WTC11 (cell line): ENCODE measurements at regions of chr19 and their contacts with region 1.

Region 1: GRCh38 chr19:44576843-44577565 is 36.4 kb upstream of the IGSF23 start:
- DNase-seq: peak; percentile 64
- ATAC-seq: peak; percentile 94
- H3K4me3 Mint-ChIP-seq: no peak overlapping the region
- H3K27ac Mint-ChIP-seq: no peak overlapping the region
- H3K4me1 Mint-ChIP-seq: peaks cover 16% of the 10 kb centered on the region
- H3K27me3 Mint-ChIP-seq: peaks cover 3% of the 10 kb centered on the region
- CTCF ChIP-seq: peak; percentile 28

Region 2: GRCh38 chr19:44552324-44552723 is 24.7 kb before region 1 on chr19:
- CTCF ChIA-PET with region 1: interaction called, 16 read pairs
- POLR2A ChIA-PET with region 1: no interaction called
- DNase-seq: peak; percentile 95
- ATAC-seq: peak; percentile 99
- H3K4me3 Mint-ChIP-seq: no peak overlapping the region
- H3K27ac Mint-ChIP-seq: no peak overlapping the region
- H3K4me1 Mint-ChIP-seq: no peaks in the 10 kb centered on the region
- H3K27me3 Mint-ChIP-seq: peaks cover 16% of the 10 kb centered on the region
- CTCF ChIP-seq: peak; percentile 79

Region 3: GRCh38 chr19:44587963-44588770 is 11.2 kb after region 1 on chr19:
- CTCF ChIA-PET with region 1: interaction called, 79 read pairs
- POLR2A ChIA-PET with region 1: no interaction called
- DNase-seq: no peak
- ATAC-seq: no peak
- H3K4me3 Mint-ChIP-seq: no peak overlapping the region
- H3K27ac Mint-ChIP-seq: no peak overlapping the region
- H3K4me1 Mint-ChIP-seq: peaks cover 5% of the 10 kb centered on the region
- H3K27me3 Mint-ChIP-seq: peaks cover 5% of the 10 kb centered on the region
- CTCF ChIP-seq: no peak